B cell (primary cell): ENCODE measurements at regions of chr2 and their contacts with region 1.

Region 1: DNA sequence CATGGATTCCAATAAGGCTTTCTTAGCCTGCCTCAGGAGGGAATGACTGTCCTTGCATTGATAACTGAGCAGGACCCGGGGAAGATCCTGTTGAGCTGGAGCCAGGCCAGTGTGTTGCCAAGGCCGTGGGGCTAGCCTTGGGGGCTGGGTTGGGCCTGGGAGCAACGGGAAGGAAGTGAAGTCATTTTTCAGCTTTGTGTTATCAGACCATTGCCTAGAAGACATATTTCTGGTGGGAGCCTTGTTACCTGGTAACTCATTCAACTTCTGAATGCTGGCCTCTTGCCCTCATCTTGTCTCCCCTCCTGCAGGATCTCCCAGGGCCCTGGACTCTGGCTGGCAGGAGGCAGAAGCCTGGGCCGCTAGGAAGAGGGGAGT is 92.7 kb upstream of the MGAT5 start:
- DNase-seq: no peak
- ATAC-seq: no peak
- H3K4me3 ChIP-seq: no peak overlapping the region
- H3K4me3 Mint-ChIP-seq: peak overlapping the region; percentile 3
- H3K27ac ChIP-seq: peak overlapping the region in 1 of 2 donors; percentile 53
- H3K27ac Mint-ChIP-seq: peak overlapping the region; percentile 8
- H3K4me1 ChIP-seq: peaks cover 60 to 83% of the 10 kb centered on the region in 2 donors
- H3K4me1 Mint-ChIP-seq: peaks cover 87% of the 10 kb centered on the region
- H3K27me3 ChIP-seq: no peaks in the 10 kb centered on the region
- H3K27me3 Mint-ChIP-seq: no peaks in the 10 kb centered on the region
- CTCF ChIP-seq: no peak

Region 2: GRCh38 chr2:134127496-134127895 is 33.7 kb before region 1 on chr2:
- CTCF ChIA-PET with region 1: no interaction called
- POLR2A ChIA-PET with region 1: no interaction called
- intact Hi-C with region 1: loop called (anchors 5 kb)
- DNase-seq: no peak
- ATAC-seq: peak; percentile 50
- H3K4me3 ChIP-seq: no peak overlapping the region
- H3K4me3 Mint-ChIP-seq: peak overlapping the region; percentile 73
- H3K27ac ChIP-seq: peak overlapping the region in 1 of 2 donors; percentile 65
- H3K27ac Mint-ChIP-seq: peak overlapping the region; percentile 71
- H3K4me1 ChIP-seq: peaks cover 70 to 74% of the 10 kb centered on the region in 2 donors
- H3K4me1 Mint-ChIP-seq: peaks cover 85% of the 10 kb centered on the region
- H3K27me3 ChIP-seq: no peaks in the 10 kb centered on the region
- H3K27me3 Mint-ChIP-seq: no peaks in the 10 kb centered on the region
- CTCF ChIP-seq: no peak

Region 3: DNA sequence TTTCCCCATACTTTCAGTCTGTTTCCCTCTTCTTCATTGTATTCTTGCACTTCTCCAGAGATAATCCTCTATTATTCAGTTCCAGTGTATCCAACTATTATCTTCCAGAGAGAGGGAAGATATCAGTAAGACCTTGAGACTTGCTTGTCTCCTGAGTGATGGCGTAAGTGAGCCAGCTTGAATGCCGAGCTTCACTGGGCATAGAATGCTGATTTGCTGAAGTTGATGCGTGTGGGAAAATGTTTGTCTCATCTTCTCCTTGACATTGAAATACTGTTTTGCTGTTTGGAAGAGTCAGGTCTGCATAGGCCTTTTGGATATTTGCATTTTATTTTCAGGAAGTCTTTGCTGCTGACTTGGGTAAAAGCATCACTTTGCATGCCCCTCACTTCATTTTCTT is 51.6 kb after region 1 on chr2:
- CTCF ChIA-PET with region 1: no interaction called
- POLR2A ChIA-PET with region 1: no interaction called
- intact Hi-C with region 1: no loop called
- DNase-seq: no peak
- ATAC-seq: no peak
- H3K4me3 ChIP-seq: no peak overlapping the region
- H3K4me3 Mint-ChIP-seq: peak overlapping the region; percentile 20
- H3K27ac ChIP-seq: peak overlapping the region; percentile 17 to 56
- H3K27ac Mint-ChIP-seq: peak overlapping the region; percentile 64
- H3K4me1 ChIP-seq: peaks cover 43 to 45% of the 10 kb centered on the region in 2 donors
- H3K4me1 Mint-ChIP-seq: peaks cover 54% of the 10 kb centered on the region
- H3K27me3 ChIP-seq: no peaks in the 10 kb centered on the region
- H3K27me3 Mint-ChIP-seq: no peaks in the 10 kb centered on the region
- CTCF ChIP-seq: no peak

Region 4: DNA sequence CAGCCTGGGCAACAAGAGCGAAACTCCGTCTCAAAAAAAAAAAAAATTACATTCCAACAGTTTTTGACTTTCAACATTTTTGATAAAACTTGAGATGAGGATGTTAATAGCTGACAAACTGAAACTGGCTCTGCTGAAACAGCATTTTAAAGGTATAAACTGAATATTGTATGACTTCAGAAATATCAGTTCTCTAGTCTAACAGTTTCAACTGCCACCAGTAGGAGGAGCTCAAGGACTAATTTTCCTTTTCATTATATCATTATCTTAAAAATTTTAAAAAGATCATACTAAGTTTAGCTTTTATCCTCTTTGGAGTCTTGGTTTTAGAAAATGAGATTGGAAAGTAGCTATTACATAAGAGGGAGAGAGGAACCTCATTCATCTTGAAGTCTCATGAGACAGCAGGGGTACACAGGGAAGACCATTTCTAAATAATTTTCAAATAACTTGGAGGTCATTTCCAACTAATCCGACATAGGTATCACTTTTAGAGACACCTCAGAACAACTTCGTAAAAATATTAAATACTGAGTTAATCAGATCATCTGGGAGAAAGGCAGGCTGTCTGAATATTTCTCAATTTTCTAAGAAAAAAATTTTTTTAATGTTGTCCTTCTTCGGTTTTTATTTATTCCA is 1752.7 kb after region 1 on chr2:
- CTCF ChIA-PET with region 1: no interaction called
- POLR2A ChIA-PET with region 1: no interaction called
- intact Hi-C with region 1: no loop called
- DNase-seq: peak; percentile 74
- ATAC-seq: peak; percentile 41
- H3K4me3 ChIP-seq: no peak overlapping the region
- H3K4me3 Mint-ChIP-seq: no peak overlapping the region
- H3K27ac ChIP-seq: peak overlapping the region in 1 of 2 donors; percentile 46
- H3K27ac Mint-ChIP-seq: peak overlapping the region; percentile 46
- H3K4me1 ChIP-seq: no peaks in the 10 kb centered on the region
- H3K4me1 Mint-ChIP-seq: peaks cover 10% of the 10 kb centered on the region
- H3K27me3 ChIP-seq: no peaks in the 10 kb centered on the region
- H3K27me3 Mint-ChIP-seq: no peaks in the 10 kb centered on the region
- CTCF ChIP-seq: peak; percentile 96